A673 (cell line): ENCODE measurements at regions of chr12 and their contacts with region 1.

Region 1: GRCh38 chr12:98418357-98419075 is 96.9 kb upstream of the TMPO start:
- DNase-seq: peak; percentile 87
- H3K4me3 ChIP-seq: no peak overlapping the region
- H3K27ac ChIP-seq: peak overlapping the region; percentile 80
- H3K4me1 ChIP-seq: peaks cover 47% of the 10 kb centered on the region
- H3K27me3 ChIP-seq: no peaks in the 10 kb centered on the region
- CTCF ChIP-seq: no peak

Region 2: GRCh38 chr12:98618952-98619351 is 200.4 kb after region 1 on chr12:
- CTCF ChIA-PET with region 1: no interaction called
- POLR2A ChIA-PET with region 1: no interaction called
- intact Hi-C with region 1: no loop called
- DNase-seq: peak; percentile 68
- H3K4me3 ChIP-seq: no peak overlapping the region
- H3K27ac ChIP-seq: no peak overlapping the region
- H3K4me1 ChIP-seq: peaks cover 4% of the 10 kb centered on the region
- H3K27me3 ChIP-seq: no peaks in the 10 kb centered on the region
- CTCF ChIP-seq: no peak

Region 3: DNA sequence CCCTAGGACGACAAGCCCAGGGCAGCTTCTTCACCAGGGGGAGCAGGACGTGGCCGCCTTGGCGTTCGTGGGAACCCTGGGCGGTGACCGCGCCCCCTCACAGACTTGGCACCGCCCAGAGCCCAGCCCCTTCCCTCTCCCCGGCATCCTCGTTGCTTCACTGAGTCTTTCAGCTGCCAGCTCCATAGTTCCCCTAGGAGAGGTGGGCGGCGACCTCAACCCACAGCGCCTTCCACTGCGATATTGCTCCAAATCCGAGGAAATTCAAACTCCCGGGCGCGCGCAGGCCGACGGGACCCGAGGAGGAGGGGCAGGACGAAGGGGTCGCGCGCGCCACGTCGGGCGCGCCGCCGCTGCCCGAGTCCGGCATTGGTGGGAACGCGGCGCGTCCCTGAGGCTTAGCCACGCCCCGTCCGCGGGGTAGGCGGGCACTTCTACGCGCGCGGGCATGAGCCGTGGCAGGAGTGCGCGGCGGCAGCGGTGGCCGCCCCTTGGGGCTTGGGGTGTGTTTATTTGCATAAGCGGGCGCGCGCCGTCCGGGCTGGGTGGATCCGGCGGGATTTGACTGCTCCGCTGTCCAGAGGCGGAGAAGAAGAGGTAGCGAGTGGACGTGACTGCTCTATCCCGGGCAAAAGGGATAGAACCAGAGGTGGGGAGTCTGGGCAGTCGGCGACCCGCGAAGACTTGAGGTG is 226.3 kb after region 1 on chr12 and contains the starts of genes APAF1 and IKBIP:
- CTCF ChIA-PET with region 1: interaction called, 12 read pairs
- POLR2A ChIA-PET with region 1: no interaction called
- intact Hi-C with region 1: no loop called
- DNase-seq: peak; percentile 98
- H3K4me3 ChIP-seq: peak within 1 kb of the TSS; percentile 85
- H3K27ac ChIP-seq: peak within 1 kb of the TSS; percentile 88
- H3K4me1 ChIP-seq: peaks cover 10% of the 10 kb centered on the region
- H3K27me3 ChIP-seq: no peaks in the 10 kb centered on the region
- CTCF ChIP-seq: no peak
- total RNA-seq, gene APAF1: 24.2 and 28.4 TPM in 2 replicates
- total RNA-seq, gene IKBIP: 23.2 and 24.3 TPM in 2 replicates

Region 4: GRCh38 chr12:98653866-98654493 is 235.5 kb after region 1 on chr12:
- CTCF ChIA-PET with region 1: interaction called, 8 read pairs
- POLR2A ChIA-PET with region 1: no interaction called
- intact Hi-C with region 1: loop called (anchors 2 kb)
- DNase-seq: peak; percentile 81
- H3K4me3 ChIP-seq: no peak overlapping the region
- H3K27ac ChIP-seq: no peak overlapping the region
- H3K4me1 ChIP-seq: no peaks in the 10 kb centered on the region
- H3K27me3 ChIP-seq: no peaks in the 10 kb centered on the region
- CTCF ChIP-seq: peak; percentile 67

Region 5: DNA sequence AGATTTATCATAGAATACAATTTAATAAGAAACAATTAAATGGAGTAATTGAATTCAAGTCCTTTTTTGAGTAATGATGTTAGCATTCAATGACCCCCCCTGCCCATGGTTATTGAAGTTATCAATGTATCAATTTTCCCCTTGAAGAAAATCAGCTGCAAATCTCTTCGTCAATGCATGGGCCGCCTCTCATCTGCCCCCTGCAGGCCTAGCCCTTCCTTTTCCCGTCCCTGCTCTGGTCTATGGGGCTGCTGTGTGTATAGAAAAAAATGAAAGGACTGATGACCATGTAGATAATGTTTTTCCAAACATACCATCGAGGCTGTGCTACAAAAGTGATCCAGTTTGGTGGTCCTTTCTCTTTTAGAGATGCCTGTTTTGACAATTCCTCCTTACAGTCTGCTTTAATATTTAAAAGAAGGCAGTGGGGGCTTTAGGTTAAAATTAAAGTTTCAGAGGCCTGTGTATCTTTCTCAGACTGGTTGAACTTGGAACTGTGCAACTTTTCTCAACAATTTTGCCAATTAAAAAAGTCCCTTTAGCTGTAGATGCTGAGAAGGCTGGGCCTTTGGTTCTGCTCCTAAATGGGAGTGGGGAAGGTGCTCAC is 324.9 kb after region 1 on chr12:
- CTCF ChIA-PET with region 1: no interaction called
- POLR2A ChIA-PET with region 1: no interaction called
- intact Hi-C with region 1: loop called (anchors 5 kb)
- DNase-seq: peak; percentile 67
- H3K4me3 ChIP-seq: no peak overlapping the region
- H3K27ac ChIP-seq: no peak overlapping the region
- H3K4me1 ChIP-seq: peaks cover 18% of the 10 kb centered on the region
- H3K27me3 ChIP-seq: no peaks in the 10 kb centered on the region
- CTCF ChIP-seq: peak; percentile 77

Region 6: GRCh38 chr12:98998697-98999299 is 580.3 kb after region 1 on chr12:
- CTCF ChIA-PET with region 1: no interaction called
- POLR2A ChIA-PET with region 1: no interaction called
- intact Hi-C with region 1: loop called (anchors 5 kb)
- DNase-seq: peak; percentile 71
- H3K4me3 ChIP-seq: no peak overlapping the region
- H3K27ac ChIP-seq: no peak overlapping the region
- H3K4me1 ChIP-seq: peaks cover 6% of the 10 kb centered on the region
- H3K27me3 ChIP-seq: no peaks in the 10 kb centered on the region
- CTCF ChIP-seq: peak; percentile 76

Region 7: DNA sequence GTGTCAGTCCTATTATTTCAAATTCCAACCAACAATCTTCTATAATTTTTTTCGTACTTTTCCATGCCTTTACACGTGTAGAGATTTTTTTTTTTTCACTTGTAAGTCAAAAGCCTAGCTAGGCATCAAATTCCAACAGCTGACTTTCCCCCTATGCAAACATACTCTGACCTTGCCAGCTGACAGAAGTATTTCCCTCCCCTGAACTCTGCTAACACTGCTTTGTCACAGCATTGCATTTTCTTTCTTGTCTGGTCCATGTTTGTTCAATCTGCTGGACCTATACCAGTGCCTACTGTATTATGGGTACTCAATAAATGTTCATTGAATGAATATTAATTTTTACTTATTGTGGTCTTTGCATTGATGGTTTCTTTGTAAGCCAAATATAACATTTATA is 793.8 kb after region 1 on chr12:
- CTCF ChIA-PET with region 1: no interaction called
- POLR2A ChIA-PET with region 1: no interaction called
- intact Hi-C with region 1: no loop called
- DNase-seq: no peak
- H3K4me3 ChIP-seq: no peak overlapping the region
- H3K27ac ChIP-seq: no peak overlapping the region
- H3K4me1 ChIP-seq: no peaks in the 10 kb centered on the region
- H3K27me3 ChIP-seq: peaks cover under 1% of the 10 kb centered on the region
- CTCF ChIP-seq: no peak